ENCODE measurements at regions of chr12 and their contacts with region 1.

Region 1: DNA sequence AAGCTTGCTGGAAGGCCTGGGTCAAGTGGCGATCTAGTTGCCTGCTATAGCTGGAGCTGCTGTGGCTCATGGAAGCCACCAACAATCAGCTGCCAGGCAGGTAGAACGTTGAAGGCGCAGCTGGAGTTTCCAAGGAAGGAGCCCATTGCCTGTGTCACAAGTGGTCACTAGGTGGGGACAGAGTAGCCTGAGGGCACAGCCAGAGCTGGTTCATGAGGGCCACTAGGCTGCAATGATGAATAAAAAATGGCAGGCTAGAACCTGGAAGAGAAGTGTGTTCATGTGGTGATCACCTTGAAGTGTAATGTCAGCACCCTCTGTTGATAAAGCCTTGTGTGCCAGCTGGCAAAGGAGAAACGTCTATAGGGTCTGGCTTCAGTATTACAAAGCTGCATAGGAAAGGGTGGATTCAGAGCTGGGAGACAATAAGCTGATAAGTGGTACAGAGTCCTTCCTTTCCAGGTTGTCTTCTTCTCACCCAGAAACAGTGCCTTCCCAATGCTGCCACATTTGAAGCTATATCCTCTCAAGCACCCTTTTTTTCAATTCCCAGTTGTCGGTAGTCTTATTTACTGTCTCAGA is 165.8 kb downstream of the EMP1 start:
- DNase-seq: peak; percentile 69
- H3K4me3 Mint-ChIP-seq: no peak overlapping the region
- H3K27ac Mint-ChIP-seq: no peak overlapping the region
- H3K4me1 Mint-ChIP-seq: no peaks in the 10 kb centered on the region
- H3K27me3 Mint-ChIP-seq: peaks cover 20% of the 10 kb centered on the region

Region 2: GRCh38 chr12:13347241-13348043 is 14.9 kb before region 1 on chr12:
- CTCF ChIA-PET with region 1: interaction called, 11 read pairs
- POLR2A ChIA-PET with region 1: no interaction called
- intact Hi-C with region 1: no loop called
- DNase-seq: peak; percentile 76
- H3K4me3 Mint-ChIP-seq: no peak overlapping the region
- H3K27ac Mint-ChIP-seq: peak overlapping the region; percentile 18
- H3K4me1 Mint-ChIP-seq: peaks cover 11% of the 10 kb centered on the region
- H3K27me3 Mint-ChIP-seq: peaks cover 33% of the 10 kb centered on the region

Region 3: DNA sequence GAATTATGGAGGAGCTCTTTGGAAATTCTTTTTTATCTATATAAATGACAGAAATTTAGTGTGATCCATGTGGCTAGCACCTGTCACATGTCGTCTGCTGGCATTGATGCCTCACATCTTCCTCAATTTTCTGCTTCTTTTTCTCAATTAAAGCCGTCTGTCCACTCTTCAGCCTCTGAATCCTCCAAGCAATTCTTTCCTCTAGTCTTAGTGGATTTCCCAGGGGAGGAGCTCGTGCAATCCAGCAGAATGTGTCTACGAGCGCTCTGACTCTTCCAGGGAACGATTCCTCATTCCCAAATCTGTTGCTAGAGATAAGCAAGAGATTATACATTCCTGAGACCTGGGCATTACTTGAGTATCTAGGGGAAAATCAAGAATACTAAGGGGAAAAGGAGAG is 10.8 kb after region 1 on chr12:
- CTCF ChIA-PET with region 1: interaction called, 20 read pairs
- POLR2A ChIA-PET with region 1: no interaction called
- intact Hi-C with region 1: no loop called
- DNase-seq: no peak
- H3K4me3 Mint-ChIP-seq: no peak overlapping the region
- H3K27ac Mint-ChIP-seq: no peak overlapping the region
- H3K4me1 Mint-ChIP-seq: no peaks in the 10 kb centered on the region
- H3K27me3 Mint-ChIP-seq: peaks cover 2% of the 10 kb centered on the region

Region 4: DNA sequence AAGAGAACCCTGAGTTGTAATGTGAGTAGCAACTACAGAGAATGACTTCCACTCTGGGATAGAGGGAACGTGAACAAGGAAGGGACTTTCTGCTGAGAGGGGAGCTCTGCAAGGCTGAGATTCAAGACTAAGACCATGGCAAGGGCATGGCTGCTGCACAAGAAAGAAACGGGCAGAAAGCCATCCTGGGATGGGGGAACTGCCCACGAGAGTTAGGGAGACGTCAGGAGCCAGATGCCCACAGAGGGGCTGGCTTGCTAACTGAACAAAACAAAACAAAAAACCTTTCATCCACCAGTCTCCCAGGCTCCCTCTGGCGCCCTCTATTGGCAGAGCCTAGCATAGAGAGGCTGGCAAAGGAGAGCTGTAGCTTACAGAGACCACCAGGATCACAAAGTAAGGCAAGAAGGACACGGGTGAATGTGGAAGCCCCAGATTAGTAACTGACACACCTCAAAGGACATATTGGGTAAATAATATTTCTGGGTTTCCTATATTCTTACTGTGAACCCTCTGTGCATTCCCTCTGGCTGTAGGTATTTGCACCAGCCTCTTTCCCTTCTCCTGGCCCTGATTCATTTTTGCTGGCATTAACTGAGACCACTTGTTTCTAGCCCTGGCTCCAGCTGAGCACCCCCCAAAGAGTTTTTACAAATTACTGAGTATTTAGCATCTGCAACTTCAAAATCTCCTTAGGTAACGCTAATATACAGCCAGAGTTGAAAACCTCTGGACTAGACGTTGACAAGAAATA is 172.5 kb after region 1 on chr12:
- CTCF ChIA-PET with region 1: interaction called, 12 read pairs
- POLR2A ChIA-PET with region 1: no interaction called
- intact Hi-C with region 1: loop called (anchors 2 kb)
- DNase-seq: peak; percentile 56
- H3K4me3 Mint-ChIP-seq: no peak overlapping the region
- H3K27ac Mint-ChIP-seq: no peak overlapping the region
- H3K4me1 Mint-ChIP-seq: peaks cover 3% of the 10 kb centered on the region
- H3K27me3 Mint-ChIP-seq: peaks cover 14% of the 10 kb centered on the region

Region 5: DNA sequence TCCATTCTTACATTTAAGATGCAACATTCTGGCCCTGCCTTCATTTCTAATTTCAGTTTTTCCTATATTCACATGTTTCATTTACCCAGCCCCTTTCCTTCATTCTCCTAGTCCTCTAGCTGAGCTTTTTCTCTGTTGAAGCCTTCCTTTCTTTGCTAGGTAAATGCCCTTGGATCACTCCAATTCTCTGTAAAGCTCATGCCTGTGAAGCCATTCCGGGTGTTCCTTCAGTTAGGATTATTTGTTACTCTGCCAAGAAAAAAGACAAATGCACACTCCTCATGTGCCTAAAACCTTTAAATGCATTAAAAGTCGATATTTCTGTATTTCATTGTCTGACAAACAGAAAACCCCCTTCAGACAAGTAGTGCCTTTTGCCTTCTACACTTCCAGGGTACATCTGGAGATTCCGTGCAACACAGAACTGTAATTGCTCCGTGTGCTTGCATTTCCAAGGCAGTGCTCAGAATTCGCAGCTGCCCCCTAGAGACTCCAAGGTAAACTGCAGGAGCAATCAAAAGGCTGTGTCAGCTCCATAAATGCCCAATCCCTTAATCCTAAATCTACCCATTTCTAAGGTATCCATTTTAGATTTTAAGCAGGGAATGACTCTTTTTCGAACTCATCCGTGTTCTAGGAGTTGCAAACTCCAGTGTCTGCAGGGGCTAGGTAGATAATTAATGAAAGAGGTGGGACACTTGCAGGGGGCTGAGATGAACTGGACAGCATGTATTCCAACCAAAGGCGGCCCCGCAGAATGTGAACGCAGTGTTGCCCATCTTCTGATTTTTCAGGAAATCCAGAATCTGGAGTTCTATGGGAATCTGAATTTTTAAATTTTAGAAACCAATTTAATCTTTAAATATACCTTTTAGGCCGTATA is 298.9 kb after region 1 on chr12:
- CTCF ChIA-PET with region 1: interaction called, 11 read pairs
- POLR2A ChIA-PET with region 1: no interaction called
- intact Hi-C with region 1: loop called (anchors 1 kb)
- DNase-seq: peak; percentile 30
- H3K4me3 Mint-ChIP-seq: no peak overlapping the region
- H3K27ac Mint-ChIP-seq: no peak overlapping the region
- H3K4me1 Mint-ChIP-seq: no peaks in the 10 kb centered on the region
- H3K27me3 Mint-ChIP-seq: no peaks in the 10 kb centered on the region

Region 6: DNA sequence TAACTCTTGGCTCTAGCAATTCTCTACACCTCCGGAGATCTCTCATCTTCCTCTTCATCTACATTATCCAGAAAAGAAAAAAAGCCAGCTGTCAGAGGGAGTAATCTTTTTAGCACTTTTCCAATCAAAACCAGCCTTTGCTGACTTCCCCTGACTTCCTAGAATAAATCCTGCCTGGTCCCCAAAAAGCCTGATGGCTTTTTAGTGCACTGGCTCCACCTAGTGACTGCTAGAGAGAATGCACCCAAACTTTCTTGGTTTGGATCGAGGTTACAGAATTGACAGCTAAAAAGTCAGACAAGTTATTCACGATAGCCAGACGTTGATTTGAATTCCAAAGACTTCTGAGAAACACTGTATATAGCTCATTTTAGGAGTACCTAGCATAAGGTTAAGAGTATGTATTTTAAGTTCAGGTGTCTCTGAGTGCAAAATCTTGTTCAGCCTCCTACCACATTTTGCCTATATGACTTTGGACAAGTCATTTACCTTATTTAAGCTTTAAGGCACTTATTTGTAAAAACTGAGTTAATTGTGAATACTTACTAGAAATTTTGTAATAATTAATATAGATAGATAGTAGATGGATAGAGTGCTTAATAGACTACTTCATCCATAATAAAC is 804.8 kb after region 1 on chr12:
- CTCF ChIA-PET with region 1: interaction called, 8 read pairs
- POLR2A ChIA-PET with region 1: no interaction called
- intact Hi-C with region 1: loop called (anchors 5 kb)
- DNase-seq: peak; percentile 53
- H3K4me3 Mint-ChIP-seq: no peak overlapping the region
- H3K27ac Mint-ChIP-seq: no peak overlapping the region
- H3K4me1 Mint-ChIP-seq: no peaks in the 10 kb centered on the region
- H3K27me3 Mint-ChIP-seq: peaks cover 4% of the 10 kb centered on the region